IMR-90 (cell line): ENCODE measurements at regions of chr3 and their contacts with region 1.

Region 1: DNA sequence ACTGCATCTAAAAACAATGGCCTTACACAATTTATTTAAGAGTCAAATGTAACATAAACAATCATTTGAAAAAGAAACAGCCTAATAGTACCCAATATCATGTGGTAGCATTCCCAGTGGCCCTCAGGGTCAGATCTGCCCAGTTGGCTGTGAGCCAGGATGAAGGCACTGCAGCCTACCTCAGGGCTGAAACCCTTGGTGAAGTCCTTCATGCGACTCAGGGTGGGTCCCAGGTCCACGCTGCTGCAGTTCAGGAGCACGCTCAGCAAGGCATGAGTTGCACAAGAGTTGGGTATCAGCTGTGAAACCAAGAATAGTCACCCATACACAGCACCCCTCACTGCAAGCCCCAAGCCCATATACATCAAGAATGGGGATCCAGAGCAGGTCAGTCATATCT is 37.1 kb downstream of the SEMA3G start:
- DNase-seq: no peak
- ATAC-seq: no peak
- H3K4me3 ChIP-seq: no peak overlapping the region
- H3K27ac ChIP-seq: no peak overlapping the region
- H3K4me1 ChIP-seq: peaks cover 18% of the 10 kb centered on the region
- H3K27me3 ChIP-seq: no peaks in the 10 kb centered on the region
- CTCF ChIP-seq: no peak
- POLR2A ChIP-seq: no peak
- RAD21 ChIP-seq: no peak

Region 2: DNA sequence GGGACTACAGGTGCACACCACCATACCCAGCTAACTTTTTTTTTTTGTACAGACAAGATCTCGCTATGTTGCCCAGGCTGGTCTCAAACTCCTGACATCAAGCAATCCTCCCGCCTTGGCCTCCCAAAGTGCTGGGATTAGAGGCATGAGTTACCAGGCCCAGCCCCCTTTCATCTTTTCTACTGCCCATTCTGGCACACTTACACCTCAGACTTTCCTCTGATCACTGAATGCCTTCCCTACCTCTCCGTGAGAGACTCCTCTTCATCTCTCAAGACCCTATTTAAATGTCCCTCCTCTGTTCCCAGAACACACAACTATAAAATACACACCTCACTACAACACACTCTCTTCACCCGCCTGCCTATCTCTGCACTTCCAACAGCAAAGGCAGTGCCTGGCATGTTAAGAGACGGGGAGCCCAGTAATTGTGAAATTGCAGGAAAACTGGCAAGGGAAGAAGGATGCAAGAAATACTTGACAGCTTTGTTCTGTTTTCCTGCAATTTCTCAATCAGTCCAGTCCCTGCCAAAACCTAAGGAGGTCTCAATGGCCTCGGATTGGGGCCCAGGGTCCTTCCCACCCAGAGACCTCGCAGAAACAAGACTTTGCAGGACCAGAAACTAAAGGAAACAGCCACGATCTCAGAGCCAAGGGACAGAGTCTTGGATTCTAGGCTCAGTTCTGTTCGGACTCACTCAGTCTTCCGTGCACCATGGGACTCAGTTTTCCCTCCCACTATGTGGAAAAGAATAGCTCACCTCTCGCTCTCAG is 466.9 kb before region 1 on chr3:
- CTCF ChIA-PET with region 1: no interaction called
- POLR2A ChIA-PET with region 1: no interaction called
- dilution Hi-C with region 1: no loop called
- in situ Hi-C with region 1: no loop called
- intact Hi-C with region 1: no loop called
- DNase-seq: no peak
- ATAC-seq: no peak
- H3K4me3 ChIP-seq: peak overlapping the region; percentile 49
- H3K27ac ChIP-seq: peak overlapping the region; percentile 32; the same call in 1 of the 2 replicates
- H3K4me1 ChIP-seq: peaks cover 13% of the 10 kb centered on the region
- H3K27me3 ChIP-seq: no peaks in the 10 kb centered on the region
- CTCF ChIP-seq: no peak
- POLR2A ChIP-seq: no peak
- RAD21 ChIP-seq: no peak

Region 3: DNA sequence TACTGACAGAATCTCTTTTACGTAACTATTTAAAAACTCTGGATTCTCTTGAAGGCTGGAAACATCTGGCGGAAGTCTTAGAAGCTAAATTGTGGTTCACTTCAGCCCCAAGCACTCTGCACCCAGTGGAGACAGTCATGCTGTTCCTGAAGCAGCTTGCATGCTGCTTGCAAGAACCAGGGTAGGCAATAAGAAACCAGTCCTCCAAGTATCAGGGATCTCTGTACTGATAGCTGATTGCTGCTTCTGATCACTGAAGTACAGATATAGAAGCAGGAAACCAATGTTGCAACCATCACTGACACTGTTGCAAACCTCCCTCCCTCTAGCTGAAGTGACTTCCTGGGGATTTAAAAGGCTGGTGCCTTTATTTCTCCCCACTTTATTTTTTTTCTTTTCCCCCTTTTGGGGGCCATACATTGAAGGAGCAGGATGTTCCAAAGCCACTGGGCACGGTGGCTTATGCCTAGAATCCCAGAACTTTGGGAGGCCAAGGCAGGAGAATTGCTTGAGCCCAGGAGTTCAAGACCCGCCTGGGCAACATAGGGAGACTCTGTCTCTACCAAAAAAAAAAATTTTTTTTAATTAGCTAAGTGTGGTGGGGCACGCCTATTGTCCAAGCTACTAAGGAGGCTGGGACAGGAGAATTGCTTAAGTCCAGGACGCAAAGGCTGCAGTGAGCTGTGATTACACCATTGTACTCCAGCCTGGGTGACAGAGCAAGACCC is 313.4 kb after region 1 on chr3:
- CTCF ChIA-PET with region 1: interaction called, 10 read pairs
- POLR2A ChIA-PET with region 1: no interaction called
- dilution Hi-C with region 1: no loop called
- in situ Hi-C with region 1: no loop called
- intact Hi-C with region 1: no loop called
- DNase-seq: no peak
- ATAC-seq: no peak
- H3K4me3 ChIP-seq: no peak overlapping the region
- H3K27ac ChIP-seq: no peak overlapping the region
- H3K4me1 ChIP-seq: no peaks in the 10 kb centered on the region
- H3K27me3 ChIP-seq: no peaks in the 10 kb centered on the region
- CTCF ChIP-seq: no peak
- POLR2A ChIP-seq: no peak
- RAD21 ChIP-seq: no peak